ENCODE measurements at regions of chr11 and their contacts with region 1.

Region 1: DNA sequence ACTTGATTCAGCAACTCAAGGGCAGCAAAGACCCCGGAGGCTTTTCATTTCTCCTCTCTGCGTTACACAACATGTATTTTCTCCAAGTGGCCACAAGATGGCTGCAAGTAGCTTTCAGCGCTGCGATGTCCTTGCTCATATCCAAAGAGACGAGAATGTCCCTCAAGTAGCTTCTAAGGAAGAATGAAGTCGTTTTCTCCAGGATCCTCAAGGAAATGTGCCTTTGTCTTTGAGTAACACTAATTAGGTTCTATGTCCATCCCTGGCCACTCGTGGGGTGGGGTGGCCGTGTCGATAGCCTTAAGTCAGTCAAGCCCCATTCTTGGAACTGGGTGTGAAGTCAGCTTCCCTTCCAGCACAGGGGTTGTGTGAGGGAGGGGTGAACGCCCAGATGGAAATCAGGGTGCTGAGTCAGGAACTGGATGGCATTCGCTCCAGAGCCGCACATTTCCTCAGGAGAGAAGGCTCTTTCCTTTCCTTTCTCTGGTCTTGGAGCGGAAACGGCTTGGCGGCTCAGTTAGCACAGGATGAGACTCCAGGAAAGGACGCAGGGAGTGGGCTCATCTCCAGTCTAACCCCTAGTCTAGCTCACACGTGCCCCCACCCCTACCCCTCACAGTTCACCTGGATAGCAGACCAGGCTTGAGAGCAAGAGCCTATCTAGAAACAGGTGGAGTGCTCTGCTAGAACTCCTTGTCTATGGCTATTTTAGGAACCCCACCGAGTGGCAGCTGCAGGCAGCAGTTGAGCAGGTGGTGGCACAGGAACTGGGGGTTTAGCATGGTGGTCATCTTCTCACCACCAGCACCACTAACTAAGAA is 44.3 kb downstream of the NNMT start:
- DNase-seq: peak; percentile 62
- ATAC-seq: peak; percentile 60
- H3K4me3 ChIP-seq: peak overlapping the region in 4 of 5 experiments; percentile 1 to 41 (median 9)
- H3K4me3 Mint-ChIP-seq: peak overlapping the region; percentile 27
- H3K27ac ChIP-seq: no peak overlapping the region
- H3K27ac Mint-ChIP-seq: no peak overlapping the region
- H3K4me1 ChIP-seq: peaks cover 6 to 8% of the 10 kb centered on the region in 2 donors
- H3K4me1 Mint-ChIP-seq: peaks cover 8% of the 10 kb centered on the region
- H3K27me3 ChIP-seq: peaks cover 0 to 8% (median 4%) of the 10 kb centered on the region in 4 experiments
- H3K27me3 Mint-ChIP-seq: peaks cover 13% of the 10 kb centered on the region
- CTCF ChIP-seq: peak; percentile 83

Region 2: GRCh38 chr11:114208377-114208776 is 132.1 kb before region 1 on chr11:
- CTCF ChIA-PET with region 1: no interaction called
- POLR2A ChIA-PET with region 1: no interaction called
- intact Hi-C with region 1: no loop called
- DNase-seq: peak; percentile 58
- ATAC-seq: peak; percentile 89
- H3K4me3 ChIP-seq: no peak overlapping the region
- H3K4me3 Mint-ChIP-seq: no peak overlapping the region
- H3K27ac ChIP-seq: no peak overlapping the region
- H3K27ac Mint-ChIP-seq: no peak overlapping the region
- H3K4me1 ChIP-seq: peaks cover 12 to 14% of the 10 kb centered on the region in 2 donors
- H3K4me1 Mint-ChIP-seq: peaks cover 15% of the 10 kb centered on the region
- H3K27me3 ChIP-seq: no peaks in the 10 kb centered on the region
- H3K27me3 Mint-ChIP-seq: peaks cover 3% of the 10 kb centered on the region
- CTCF ChIP-seq: no peak

Region 3: DNA sequence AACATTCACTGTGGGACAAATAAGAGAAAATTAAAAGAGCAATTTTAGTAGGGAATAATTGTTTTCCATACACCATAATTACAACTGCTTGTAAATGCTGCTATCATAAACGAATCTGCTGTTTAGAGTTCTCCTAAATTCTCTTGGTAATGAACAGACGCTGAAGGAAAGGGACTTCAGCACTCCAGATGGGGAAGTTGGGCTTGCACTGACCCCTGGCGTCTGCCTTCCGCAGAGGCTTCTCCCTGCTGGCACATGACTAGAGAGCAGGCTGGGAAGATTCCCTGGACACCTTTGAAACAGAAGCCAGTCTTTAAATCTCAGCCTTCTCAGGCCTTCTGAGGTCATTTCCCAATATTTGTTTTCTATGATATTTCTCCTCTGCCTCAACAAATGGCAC is 421.9 kb after region 1 on chr11:
- CTCF ChIA-PET with region 1: interaction called, 3 read pairs
- POLR2A ChIA-PET with region 1: no interaction called
- intact Hi-C with region 1: loop called (anchors 2 kb)
- DNase-seq: no peak
- ATAC-seq: no peak
- H3K4me3 ChIP-seq: no peak overlapping the region
- H3K4me3 Mint-ChIP-seq: no peak overlapping the region
- H3K27ac ChIP-seq: no peak overlapping the region
- H3K27ac Mint-ChIP-seq: no peak overlapping the region
- H3K4me1 ChIP-seq: no peaks in the 10 kb centered on the region
- H3K4me1 Mint-ChIP-seq: no peaks in the 10 kb centered on the region
- H3K27me3 ChIP-seq: peaks cover 0 to 2% (median 0%) of the 10 kb centered on the region in 4 experiments
- H3K27me3 Mint-ChIP-seq: peaks cover 9% of the 10 kb centered on the region
- CTCF ChIP-seq: peak; percentile 18

Region 4: DNA sequence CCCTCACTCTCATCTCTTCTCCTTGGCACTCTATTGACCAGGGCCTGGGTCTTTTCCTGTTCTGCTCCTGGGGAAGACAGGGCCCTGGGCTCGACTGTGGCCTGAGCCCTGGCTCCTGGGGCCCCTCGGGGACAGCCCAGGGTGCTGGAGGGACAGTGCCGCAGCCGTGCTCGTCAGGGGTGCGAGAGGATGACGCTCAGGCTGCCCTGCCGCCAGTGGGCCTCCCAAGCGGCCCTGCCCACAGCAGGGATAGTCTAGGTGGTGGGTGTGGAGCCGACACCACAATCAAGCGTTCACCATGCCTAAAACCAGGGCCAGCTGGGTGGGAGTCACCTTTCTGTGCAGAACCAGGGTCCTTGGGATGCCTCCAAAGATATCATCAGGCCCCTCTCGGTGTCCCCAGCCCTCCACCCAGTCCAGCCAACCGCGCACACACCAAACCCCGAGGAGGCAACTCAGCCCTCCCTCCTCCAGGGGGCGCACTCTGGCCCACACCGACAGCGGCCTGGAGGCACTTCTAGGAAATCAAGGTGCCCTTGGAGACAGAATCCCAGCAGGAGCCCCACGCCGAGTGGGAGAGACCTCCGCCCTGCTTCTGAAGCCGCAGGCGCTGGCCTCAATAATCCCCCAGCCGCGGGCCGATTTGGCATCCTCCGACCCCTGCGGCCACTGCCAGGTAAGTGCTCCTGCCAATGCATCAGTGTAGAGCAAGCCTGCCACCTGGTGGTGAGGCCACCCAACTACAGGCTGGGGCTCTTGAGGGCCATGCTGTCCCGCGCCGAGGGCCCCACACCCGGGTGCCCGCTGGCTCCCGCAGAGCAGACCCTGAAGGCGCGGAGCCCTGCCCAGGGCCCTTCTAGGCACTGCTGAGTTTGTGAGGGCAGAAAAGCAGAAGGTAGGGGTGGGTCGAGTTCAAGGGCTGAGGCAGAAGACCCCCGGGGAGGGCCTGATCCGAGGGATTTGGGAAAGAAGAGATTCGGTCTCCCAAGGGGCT is 1935.8 kb after region 1 on chr11:
- CTCF ChIA-PET with region 1: no interaction called
- POLR2A ChIA-PET with region 1: no interaction called
- intact Hi-C with region 1: loop called (anchors 10 kb)
- DNase-seq: peak; percentile 61
- ATAC-seq: no peak
- H3K4me3 ChIP-seq: no peak overlapping the region
- H3K4me3 Mint-ChIP-seq: no peak overlapping the region
- H3K27ac ChIP-seq: no peak overlapping the region
- H3K27ac Mint-ChIP-seq: no peak overlapping the region
- H3K4me1 ChIP-seq: peaks cover 0 to 3% of the 10 kb centered on the region in 2 donors
- H3K4me1 Mint-ChIP-seq: no peaks in the 10 kb centered on the region
- H3K27me3 ChIP-seq: peaks cover 0 to 4% (median 0%) of the 10 kb centered on the region in 4 experiments
- H3K27me3 Mint-ChIP-seq: peaks cover 3% of the 10 kb centered on the region
- CTCF ChIP-seq: peak; percentile 71

Measured in B cell (primary cell).